HEK293T (cell line): ENCODE measurements at regions of chr13 and their contacts with region 1.

Region 1: DNA sequence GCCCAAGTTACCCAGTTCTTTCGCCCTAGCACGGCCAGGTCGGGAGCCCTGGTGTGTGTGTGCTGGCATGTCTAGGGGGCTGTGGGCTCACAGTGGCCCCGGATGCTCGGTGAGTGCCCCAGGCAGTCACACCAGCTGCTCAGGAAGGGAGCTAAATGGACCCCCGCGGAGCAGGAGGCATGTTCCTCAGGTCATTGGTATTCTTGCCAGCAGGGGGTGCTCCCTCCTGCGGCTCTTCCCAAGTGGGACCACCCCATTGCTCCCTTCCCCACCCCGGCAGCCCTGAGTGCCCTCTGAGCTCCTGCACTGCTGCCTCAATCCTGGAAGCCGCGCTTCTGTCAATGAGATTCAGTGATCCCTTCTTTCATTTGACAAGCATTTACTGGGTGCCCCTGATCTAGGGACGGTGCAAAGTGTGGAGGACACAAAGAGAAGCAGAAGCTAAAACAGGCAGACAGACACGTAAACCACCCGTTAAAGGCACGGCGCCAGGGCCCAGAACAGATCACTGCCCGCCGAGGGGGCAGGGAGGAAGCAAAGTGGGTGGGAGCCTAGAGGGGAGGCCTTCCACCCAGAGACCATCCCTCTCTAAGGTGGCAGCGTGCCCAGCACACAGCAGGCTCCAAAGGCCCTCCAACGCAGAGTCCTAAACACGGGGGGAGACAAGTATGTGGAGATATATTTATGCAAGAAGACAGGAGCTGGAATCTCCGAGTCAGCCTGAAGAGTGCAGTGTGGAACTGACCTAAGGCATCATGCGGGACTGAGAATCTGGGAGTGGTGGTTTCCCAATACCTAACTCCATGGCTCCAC is 5.2 kb upstream of the ADPRHL1 start:
- DNase-seq: peak; percentile 14

Region 2: GRCh38 chr13:113468472-113469201 is 10.2 kb after region 1 on chr13:
- CTCF ChIA-PET with region 1: no interaction called
- POLR2A ChIA-PET with region 1: no interaction called
- DNase-seq: no peak

Region 3: DNA sequence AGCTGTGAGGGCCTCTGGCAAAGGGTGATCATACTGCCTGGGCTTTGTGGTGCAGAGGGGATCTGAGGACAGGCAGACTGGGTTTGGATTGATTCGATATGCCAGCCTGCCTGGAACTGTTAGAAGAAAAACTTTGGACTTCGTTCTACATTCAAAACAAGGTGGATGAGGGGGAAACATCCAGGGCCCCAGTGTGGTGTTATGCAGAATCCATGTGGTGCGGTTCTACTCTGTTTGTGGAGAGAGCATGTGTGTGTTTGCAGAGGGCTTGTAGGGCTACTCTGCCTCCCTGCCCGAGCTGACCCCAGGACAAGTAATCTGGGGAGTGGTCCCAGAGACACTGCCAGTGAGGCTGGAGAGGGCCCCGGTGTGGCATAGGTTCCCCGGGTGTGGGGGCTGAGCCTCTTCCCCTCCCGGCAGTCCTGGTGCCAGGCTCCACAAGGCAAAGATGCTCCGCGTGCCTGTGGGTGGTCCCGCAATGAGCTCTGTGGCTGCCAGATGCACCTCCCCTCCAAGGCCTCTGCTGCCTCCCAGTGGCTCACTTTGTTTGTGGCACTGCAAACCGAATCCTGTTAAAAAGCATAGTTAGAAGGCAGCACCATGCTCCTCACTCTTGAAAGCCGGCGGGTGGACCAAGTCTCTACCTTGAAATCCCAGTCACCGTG is 103.8 kb after region 1 on chr13:
- CTCF ChIA-PET with region 1: interaction called, 18 read pairs
- POLR2A ChIA-PET with region 1: no interaction called
- DNase-seq: peak; percentile 59